ENCODE measurements at regions of chr1 and their contacts with region 1.

Region 1: GRCh38 chr1:24849672-24850295 is 80.3 kb downstream of the RUNX3 start:
- DNase-seq: no peak
- H3K4me3 ChIP-seq: no peak overlapping the region
- H3K27ac ChIP-seq: no peak overlapping the region
- H3K4me1 ChIP-seq: no peaks in the 10 kb centered on the region
- H3K27me3 ChIP-seq: no peaks in the 10 kb centered on the region
- CTCF ChIP-seq: no peak
- POLR2A ChIP-seq: no peak

Region 2: GRCh38 chr1:25198663-25199252 is 349.0 kb after region 1 on chr1:
- intact Hi-C with region 1: loop called (anchors 10 kb)
- DNase-seq: peak; percentile 82 to 93
- H3K4me3 ChIP-seq: peak overlapping the region in 2 of 3 donors; percentile 32 to 54
- H3K27ac ChIP-seq: peak overlapping the region; percentile 95 to 96
- H3K4me1 ChIP-seq: peaks cover 5 to 7% of the 10 kb centered on the region in 2 donors
- H3K27me3 ChIP-seq: no peaks in the 10 kb centered on the region
- CTCF ChIP-seq: peak in 2 of 3 donors; percentile 21 to 51
- POLR2A ChIP-seq: no peak

Measured in breast epithelium (tissue), 4 donors.